Activated CD4-positive, alpha-beta memory T cell treated with anti-CD3 and anti-CD28 coated beads, Interleukin-2, amount 10 ng/mL, durations not matched to agents 7 days and 5 days (primary cell): ENCODE measurements at regions of chr1 and their contacts with region 1.

Region 1: GRCh38 chr1:46718727-46719622 is at the start of gene EFCAB14:
- DNase-seq: peak; percentile 100
- H3K4me3 Mint-ChIP-seq: peak within 1 kb of the TSS; percentile 94
- H3K27ac Mint-ChIP-seq: peak within 1 kb of the TSS; percentile 88
- H3K4me1 Mint-ChIP-seq: peaks cover 47% of the 10 kb centered on the region
- H3K27me3 Mint-ChIP-seq: no peaks in the 10 kb centered on the region
- total RNA-seq, gene EFCAB14: 96.1 to 96.9 TPM

Region 2: DNA sequence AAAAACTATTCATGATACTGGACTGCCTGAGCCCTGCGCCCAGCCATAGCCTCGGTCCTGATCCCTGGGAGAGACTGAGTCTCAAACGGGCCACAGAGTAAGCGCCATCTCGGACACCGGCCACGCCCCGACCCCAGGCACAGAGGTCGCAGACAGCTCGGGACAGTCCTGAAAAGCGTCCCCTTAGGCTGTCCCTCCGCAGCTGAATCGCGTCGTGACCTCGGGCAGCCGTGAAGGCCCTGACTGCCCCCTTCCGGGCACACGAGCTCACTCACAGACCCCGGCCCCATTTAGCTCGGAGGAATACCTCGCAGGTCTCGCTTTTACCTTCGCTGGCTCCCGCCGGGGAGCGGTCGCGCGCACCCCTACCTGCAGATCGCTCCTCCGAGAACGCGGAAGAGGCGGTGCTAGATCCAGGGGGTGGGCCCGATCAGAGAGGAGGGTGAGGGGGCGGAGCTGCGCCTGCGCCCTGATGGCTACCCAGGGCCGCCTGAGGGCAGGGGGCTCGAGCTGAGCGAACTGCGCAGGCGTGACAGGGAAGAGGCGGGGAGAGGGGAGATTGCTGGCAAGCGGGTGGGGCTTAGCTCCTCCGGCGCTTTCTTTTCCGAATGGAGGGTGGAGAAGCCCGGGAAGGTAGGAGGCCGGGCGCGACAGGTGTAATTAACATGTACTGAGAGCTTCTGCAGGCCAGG is 115.0 kb before region 1 on chr1 and contains the start of gene MKNK1:
- CTCF ChIA-PET with region 1: interaction called, 6 read pairs
- POLR2A ChIA-PET with region 1: interaction called, 12 read pairs
- DNase-seq: peak; percentile 98
- H3K4me3 Mint-ChIP-seq: peak within 1 kb of the TSS; percentile 86
- H3K27ac Mint-ChIP-seq: peak within 1 kb of the TSS; percentile 81
- H3K4me1 Mint-ChIP-seq: peaks cover 70% of the 10 kb centered on the region
- H3K27me3 Mint-ChIP-seq: no peaks in the 10 kb centered on the region
- total RNA-seq, gene MKNK1: 81.5 to 83.7 TPM

Region 3: GRCh38 chr1:46616277-46617107 is 102.5 kb before region 1 on chr1 and contains the start of gene MOB3C:
- CTCF ChIA-PET with region 1: no interaction called
- POLR2A ChIA-PET with region 1: interaction called, 10 read pairs
- DNase-seq: peak; percentile 71
- H3K4me3 Mint-ChIP-seq: peak within 1 kb of the TSS; percentile 88
- H3K27ac Mint-ChIP-seq: peak within 1 kb of the TSS; percentile 75
- H3K4me1 Mint-ChIP-seq: peaks cover 70% of the 10 kb centered on the region
- H3K27me3 Mint-ChIP-seq: no peaks in the 10 kb centered on the region
- total RNA-seq, gene MOB3C: 23.2 to 23.8 TPM

Region 4: GRCh38 chr1:46667782-46668760 is 50.9 kb before region 1 on chr1 and contains the start of gene ATPAF1:
- CTCF ChIA-PET with region 1: no interaction called
- POLR2A ChIA-PET with region 1: interaction called, 19 read pairs
- DNase-seq: peak; percentile 77
- H3K4me3 Mint-ChIP-seq: no peak within 1 kb of the TSS
- H3K27ac Mint-ChIP-seq: peak within 1 kb of the TSS; percentile 47
- H3K4me1 Mint-ChIP-seq: peaks cover 18% of the 10 kb centered on the region
- H3K27me3 Mint-ChIP-seq: no peaks in the 10 kb centered on the region
- total RNA-seq, gene ATPAF1: 51.1 to 51.2 TPM

Region 5: DNA sequence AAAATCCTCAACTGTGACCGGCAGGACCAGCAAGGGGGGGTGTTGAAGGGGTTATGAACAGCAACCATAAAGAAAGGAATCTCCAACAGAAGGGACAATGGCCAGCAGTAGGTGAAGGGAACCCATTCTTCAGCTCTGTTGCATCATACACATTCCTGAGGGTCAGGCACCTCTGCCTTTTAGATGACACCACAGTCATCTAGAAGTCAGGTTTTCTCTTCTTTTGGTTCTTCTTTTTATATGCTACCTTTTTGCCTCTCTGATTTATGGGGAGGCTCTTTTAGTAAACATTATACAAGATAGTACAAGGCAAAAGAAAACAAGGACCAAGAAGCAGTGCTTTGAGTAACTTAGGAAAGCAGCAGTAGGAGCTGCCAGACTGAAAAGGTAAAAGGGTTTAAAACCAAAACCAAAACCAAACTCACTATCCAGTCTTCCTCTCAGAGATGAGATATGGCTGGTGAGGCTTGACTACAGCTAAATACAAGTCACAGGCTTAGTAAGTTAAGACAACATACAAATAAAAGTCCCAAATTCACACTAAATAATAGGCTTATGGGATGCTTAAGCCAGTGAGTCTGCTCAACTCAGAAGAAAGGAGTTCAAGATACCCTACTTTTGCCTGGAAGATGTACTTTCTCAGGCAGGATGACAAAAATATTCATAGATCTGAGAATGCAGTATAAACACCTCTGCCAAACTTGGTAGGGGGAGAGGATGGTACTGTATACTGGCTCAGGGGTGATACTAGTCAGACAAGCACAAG is 43.2 kb before region 1 on chr1:
- CTCF ChIA-PET with region 1: interaction called, 3 read pairs
- POLR2A ChIA-PET with region 1: interaction called, 11 read pairs
- DNase-seq: no peak
- H3K4me3 Mint-ChIP-seq: peak overlapping the region; percentile 44
- H3K27ac Mint-ChIP-seq: peak overlapping the region; percentile 89
- H3K4me1 Mint-ChIP-seq: peaks cover 35% of the 10 kb centered on the region
- H3K27me3 Mint-ChIP-seq: no peaks in the 10 kb centered on the region

Region 6: DNA sequence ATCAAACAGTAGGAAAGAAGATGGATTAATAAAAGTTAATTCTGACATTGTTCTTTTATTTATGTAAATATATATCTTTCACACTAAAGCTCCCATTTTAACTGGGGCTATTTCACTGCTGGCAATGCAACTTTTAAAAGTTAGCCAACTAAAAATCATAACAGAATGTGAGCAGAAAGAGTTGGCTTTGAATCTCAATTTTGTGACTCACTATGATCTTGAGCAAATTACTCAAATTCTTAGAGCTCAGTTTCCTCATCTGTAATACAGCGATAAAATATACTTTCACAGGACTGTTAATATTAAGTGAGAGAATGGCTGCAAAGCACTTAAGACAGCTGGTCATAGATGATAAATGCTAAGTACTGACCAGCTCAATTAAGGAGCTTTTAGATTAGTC is 10.9 kb before region 1 on chr1:
- CTCF ChIA-PET with region 1: interaction called, 4 read pairs
- POLR2A ChIA-PET with region 1: interaction called, 20 read pairs
- DNase-seq: no peak
- H3K4me3 Mint-ChIP-seq: no peak overlapping the region
- H3K27ac Mint-ChIP-seq: no peak overlapping the region
- H3K4me1 Mint-ChIP-seq: peaks cover 10% of the 10 kb centered on the region
- H3K27me3 Mint-ChIP-seq: no peaks in the 10 kb centered on the region